Natural killer cell (primary cell): ENCODE measurements at regions of chr2 and their contacts with region 1.

Region 1: DNA sequence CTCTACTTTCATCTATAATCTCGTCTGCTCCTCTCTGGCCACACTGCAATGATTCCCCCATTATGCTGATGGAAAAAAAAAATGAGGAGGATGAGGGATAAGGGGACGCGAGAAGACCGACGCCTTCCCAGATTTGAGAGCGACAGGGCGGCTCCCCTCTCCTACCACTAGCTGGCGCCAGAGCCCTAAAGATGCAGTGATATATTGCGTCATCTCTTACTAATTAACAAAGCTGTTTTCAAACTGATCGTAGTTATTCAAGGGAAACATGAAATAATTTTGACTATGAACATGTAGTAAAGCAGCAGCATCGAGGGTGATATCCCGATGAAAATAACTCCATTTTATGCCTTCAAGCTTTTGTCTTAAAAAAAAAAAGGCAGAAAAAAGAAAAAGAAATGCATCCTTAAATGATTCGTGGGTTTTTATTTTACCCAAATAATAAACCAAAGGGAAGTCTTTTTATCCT is 48.0 kb upstream of the HNRNPA3 start:
- DNase-seq: peak; percentile 71 to 89
- ATAC-seq: peak; percentile 79 to 81 (median 80)
- H3K4me3 ChIP-seq: peak overlapping the region; percentile 44
- H3K4me3 Mint-ChIP-seq: no peak overlapping the region
- H3K27ac ChIP-seq: peak overlapping the region; percentile 24
- H3K27ac Mint-ChIP-seq: no peak overlapping the region
- H3K4me1 ChIP-seq: peaks cover 12% of the 10 kb centered on the region
- H3K4me1 Mint-ChIP-seq: peaks cover 13 to 18% of the 10 kb centered on the region in 2 donors
- H3K27me3 ChIP-seq: no peaks in the 10 kb centered on the region
- H3K27me3 Mint-ChIP-seq: peaks cover 0 to 2% of the 10 kb centered on the region in 2 donors
- CTCF ChIP-seq: peak; percentile 100

Region 2: DNA sequence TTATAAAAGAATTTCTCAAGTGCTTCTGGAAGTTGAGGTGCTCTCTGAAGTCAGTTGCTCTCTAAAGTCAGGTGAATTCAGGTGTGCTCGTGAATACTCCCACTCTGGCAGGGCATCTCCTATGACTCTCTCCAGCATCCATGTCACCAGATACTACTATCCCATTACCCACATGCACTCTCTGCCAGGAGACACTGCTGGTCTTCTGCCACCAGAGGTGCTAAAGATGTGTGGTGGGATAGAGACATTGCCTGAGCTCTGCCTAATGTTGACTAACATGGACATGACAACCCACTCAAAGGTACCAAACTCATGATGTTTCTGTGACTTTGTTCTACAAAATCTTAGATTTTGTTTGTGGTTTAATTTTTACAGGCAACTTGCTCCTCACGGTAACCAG is 58.4 kb before region 1 on chr2:
- intact Hi-C with region 1: no loop called
- DNase-seq: peak in 1 of 2 donors; percentile 3
- ATAC-seq: peak in 1 of 3 donors; percentile 38
- H3K4me3 ChIP-seq: no peak overlapping the region
- H3K4me3 Mint-ChIP-seq: no peak overlapping the region
- H3K27ac ChIP-seq: no peak overlapping the region
- H3K27ac Mint-ChIP-seq: no peak overlapping the region
- H3K4me1 ChIP-seq: no peaks in the 10 kb centered on the region
- H3K4me1 Mint-ChIP-seq: no peaks in the 10 kb centered on the region
- H3K27me3 ChIP-seq: no peaks in the 10 kb centered on the region
- H3K27me3 Mint-ChIP-seq: peaks cover 13 to 19% of the 10 kb centered on the region in 2 donors
- CTCF ChIP-seq: no peak

Region 3: GRCh38 chr2:177129610-177130009 is 35.0 kb before region 1 on chr2:
- intact Hi-C with region 1: no loop called
- DNase-seq: no peak
- ATAC-seq: no peak
- H3K4me3 ChIP-seq: no peak overlapping the region
- H3K4me3 Mint-ChIP-seq: no peak overlapping the region
- H3K27ac ChIP-seq: no peak overlapping the region
- H3K27ac Mint-ChIP-seq: no peak overlapping the region
- H3K4me1 ChIP-seq: no peaks in the 10 kb centered on the region
- H3K4me1 Mint-ChIP-seq: no peaks in the 10 kb centered on the region
- H3K27me3 ChIP-seq: no peaks in the 10 kb centered on the region
- H3K27me3 Mint-ChIP-seq: peaks cover 14 to 22% of the 10 kb centered on the region in 2 donors
- CTCF ChIP-seq: no peak

Region 4: GRCh38 chr2:177212106-177212890 is 47.7 kb after region 1 on chr2 and contains the start of gene HNRNPA3:
- intact Hi-C with region 1: loop called (anchors 2 kb)
- DNase-seq: peak; percentile 100
- ATAC-seq: peak; percentile 84 to 95 (median 84)
- H3K4me3 ChIP-seq: peak within 1 kb of the TSS; percentile 70
- H3K4me3 Mint-ChIP-seq: peak within 1 kb of the TSS; percentile 94
- H3K27ac ChIP-seq: peak within 1 kb of the TSS; percentile 100
- H3K27ac Mint-ChIP-seq: peak within 1 kb of the TSS; percentile 99 to 100
- H3K4me1 ChIP-seq: peaks cover 18% of the 10 kb centered on the region
- H3K4me1 Mint-ChIP-seq: peaks cover 47 to 51% of the 10 kb centered on the region in 2 donors
- H3K27me3 ChIP-seq: no peaks in the 10 kb centered on the region
- H3K27me3 Mint-ChIP-seq: no peaks in the 10 kb centered on the region
- CTCF ChIP-seq: no peak
- total RNA-seq, gene HNRNPA3: 223 to 298 (median 289) TPM

Region 5: GRCh38 chr2:177296040-177296439 is 131.4 kb after region 1 on chr2:
- intact Hi-C with region 1: loop called (anchors 1 kb)
- DNase-seq: peak in 1 of 2 donors; percentile 67
- ATAC-seq: peak in 2 of 3 donors; percentile 54 to 67
- H3K4me3 ChIP-seq: no peak overlapping the region
- H3K4me3 Mint-ChIP-seq: no peak overlapping the region
- H3K27ac ChIP-seq: no peak overlapping the region
- H3K27ac Mint-ChIP-seq: peak overlapping the region in 1 of 2 donors; percentile 20
- H3K4me1 ChIP-seq: no peaks in the 10 kb centered on the region
- H3K4me1 Mint-ChIP-seq: no peaks in the 10 kb centered on the region
- H3K27me3 ChIP-seq: no peaks in the 10 kb centered on the region
- H3K27me3 Mint-ChIP-seq: no peaks in the 10 kb centered on the region
- CTCF ChIP-seq: peak; percentile 59

Region 6: DNA sequence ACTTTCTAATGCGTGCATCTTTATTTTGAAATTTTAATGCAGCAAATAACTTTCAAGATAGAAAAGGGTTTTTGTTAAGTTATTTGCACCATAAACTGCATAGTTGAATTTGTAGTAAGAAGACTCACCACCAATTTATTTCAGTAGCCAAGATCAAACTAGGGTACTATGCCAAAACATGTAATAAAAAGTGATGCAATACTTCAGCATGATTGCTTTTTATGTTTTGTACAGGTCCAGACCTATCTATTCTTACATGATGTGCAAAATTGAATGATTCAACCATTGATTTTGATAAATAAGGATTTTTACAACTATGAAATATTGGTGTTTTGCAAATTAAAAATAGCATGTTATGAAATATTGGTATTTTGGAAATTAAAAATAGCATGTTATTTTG is 254.7 kb after region 1 on chr2:
- intact Hi-C with region 1: loop called (anchors 1 kb)
- DNase-seq: no peak
- ATAC-seq: no peak
- H3K4me3 ChIP-seq: no peak overlapping the region
- H3K4me3 Mint-ChIP-seq: no peak overlapping the region
- H3K27ac ChIP-seq: no peak overlapping the region
- H3K27ac Mint-ChIP-seq: no peak overlapping the region
- H3K4me1 ChIP-seq: no peaks in the 10 kb centered on the region
- H3K4me1 Mint-ChIP-seq: peaks cover 27 to 36% of the 10 kb centered on the region in 2 donors
- H3K27me3 ChIP-seq: no peaks in the 10 kb centered on the region
- H3K27me3 Mint-ChIP-seq: no peaks in the 10 kb centered on the region
- CTCF ChIP-seq: no peak

Region 7: GRCh38 chr2:177604271-177605065 is 439.9 kb after region 1 on chr2:
- intact Hi-C with region 1: loop called (anchors 5 kb)
- DNase-seq: peak in 1 of 2 donors; percentile 42
- ATAC-seq: peak in 1 of 3 donors; percentile 24
- H3K4me3 ChIP-seq: no peak overlapping the region
- H3K4me3 Mint-ChIP-seq: no peak overlapping the region
- H3K27ac ChIP-seq: no peak overlapping the region
- H3K27ac Mint-ChIP-seq: no peak overlapping the region
- H3K4me1 ChIP-seq: no peaks in the 10 kb centered on the region
- H3K4me1 Mint-ChIP-seq: no peaks in the 10 kb centered on the region
- H3K27me3 ChIP-seq: peaks cover 2% of the 10 kb centered on the region
- H3K27me3 Mint-ChIP-seq: peaks cover 7 to 14% of the 10 kb centered on the region in 2 donors
- CTCF ChIP-seq: peak; percentile 44

Region 8: GRCh38 chr2:177763532-177764265 is 599.1 kb after region 1 on chr2:
- intact Hi-C with region 1: loop called (anchors 5 kb)
- DNase-seq: peak; percentile 67 to 85
- ATAC-seq: peak; percentile 90 to 99 (median 98)
- H3K4me3 ChIP-seq: no peak overlapping the region
- H3K4me3 Mint-ChIP-seq: no peak overlapping the region
- H3K27ac ChIP-seq: no peak overlapping the region
- H3K27ac Mint-ChIP-seq: no peak overlapping the region
- H3K4me1 ChIP-seq: peaks cover 5% of the 10 kb centered on the region
- H3K4me1 Mint-ChIP-seq: peaks cover 4% of the 10 kb centered on the region in 2 donors
- H3K27me3 ChIP-seq: no peaks in the 10 kb centered on the region
- H3K27me3 Mint-ChIP-seq: peaks cover 24 to 32% of the 10 kb centered on the region in 2 donors
- CTCF ChIP-seq: peak; percentile 90

Region 9: DNA sequence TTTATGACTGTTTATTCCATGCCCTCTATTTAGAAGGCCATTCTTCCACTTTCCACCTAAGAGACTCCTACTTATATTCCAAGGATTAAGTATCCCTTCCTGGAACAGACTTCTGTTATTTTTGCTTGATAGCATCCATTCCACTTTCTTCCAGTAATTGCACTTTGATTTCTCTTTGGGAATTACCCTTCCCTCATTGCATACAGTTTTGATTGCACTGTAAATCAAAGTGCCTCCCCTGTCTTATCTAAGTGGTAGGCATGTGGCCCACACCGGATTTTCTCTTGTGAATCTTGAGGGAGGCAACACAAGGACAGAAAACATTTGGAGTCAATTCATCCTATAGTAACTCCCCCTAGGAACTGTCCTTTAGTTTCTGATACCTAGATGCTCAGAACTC is 787.5 kb after region 1 on chr2:
- intact Hi-C with region 1: no loop called
- DNase-seq: no peak
- ATAC-seq: no peak
- H3K4me3 ChIP-seq: no peak overlapping the region
- H3K4me3 Mint-ChIP-seq: no peak overlapping the region
- H3K27ac ChIP-seq: no peak overlapping the region
- H3K27ac Mint-ChIP-seq: no peak overlapping the region
- H3K4me1 ChIP-seq: no peaks in the 10 kb centered on the region
- H3K4me1 Mint-ChIP-seq: no peaks in the 10 kb centered on the region
- H3K27me3 ChIP-seq: no peaks in the 10 kb centered on the region
- H3K27me3 Mint-ChIP-seq: peaks cover 0 to 2% of the 10 kb centered on the region in 2 donors
- CTCF ChIP-seq: no peak